GM12878 (cell line): ENCODE measurements at regions of chr18 and their contacts with region 1.

Region 1: GRCh38 chr18:21612125-21612991 is at the start of gene SNRPD1:
- DNase-seq: peak; percentile 71
- ATAC-seq: peak; percentile 98
- H3K4me3 ChIP-seq: peak within 1 kb of the TSS; percentile 83
- H3K27ac ChIP-seq: peak within 1 kb of the TSS; percentile 95
- H3K4me1 ChIP-seq: no peaks in the 10 kb centered on the region
- H3K27me3 ChIP-seq: no peaks in the 10 kb centered on the region
- CTCF ChIP-seq: peak; percentile 97 to 98 (median 98)
- EP300 ChIP-seq: no peak
- POLR2A ChIP-seq: peak; percentile 98
- RAD21 ChIP-seq: peak; percentile 43
- polyA plus RNA-seq, gene SNRPD1: 842 to 866 TPM

Region 2: GRCh38 chr18:21141668-21142422 is 470.5 kb before region 1 on chr18:
- CTCF ChIA-PET with region 1: no interaction called
- POLR2A ChIA-PET with region 1: no interaction called
- RAD21 ChIA-PET with region 1: no interaction called
- SMC1A ChIA-PET with region 1: no interaction called
- in situ Hi-C with region 1: no loop called
- intact Hi-C with region 1: no loop called
- DNase-seq: no peak
- ATAC-seq: no peak
- H3K4me3 ChIP-seq: no peak overlapping the region
- H3K27ac ChIP-seq: no peak overlapping the region
- H3K4me1 ChIP-seq: no peaks in the 10 kb centered on the region
- H3K27me3 ChIP-seq: no peaks in the 10 kb centered on the region
- CTCF ChIP-seq: no peak
- EP300 ChIP-seq: no peak
- POLR2A ChIP-seq: no peak
- RAD21 ChIP-seq: no peak

Region 3: DNA sequence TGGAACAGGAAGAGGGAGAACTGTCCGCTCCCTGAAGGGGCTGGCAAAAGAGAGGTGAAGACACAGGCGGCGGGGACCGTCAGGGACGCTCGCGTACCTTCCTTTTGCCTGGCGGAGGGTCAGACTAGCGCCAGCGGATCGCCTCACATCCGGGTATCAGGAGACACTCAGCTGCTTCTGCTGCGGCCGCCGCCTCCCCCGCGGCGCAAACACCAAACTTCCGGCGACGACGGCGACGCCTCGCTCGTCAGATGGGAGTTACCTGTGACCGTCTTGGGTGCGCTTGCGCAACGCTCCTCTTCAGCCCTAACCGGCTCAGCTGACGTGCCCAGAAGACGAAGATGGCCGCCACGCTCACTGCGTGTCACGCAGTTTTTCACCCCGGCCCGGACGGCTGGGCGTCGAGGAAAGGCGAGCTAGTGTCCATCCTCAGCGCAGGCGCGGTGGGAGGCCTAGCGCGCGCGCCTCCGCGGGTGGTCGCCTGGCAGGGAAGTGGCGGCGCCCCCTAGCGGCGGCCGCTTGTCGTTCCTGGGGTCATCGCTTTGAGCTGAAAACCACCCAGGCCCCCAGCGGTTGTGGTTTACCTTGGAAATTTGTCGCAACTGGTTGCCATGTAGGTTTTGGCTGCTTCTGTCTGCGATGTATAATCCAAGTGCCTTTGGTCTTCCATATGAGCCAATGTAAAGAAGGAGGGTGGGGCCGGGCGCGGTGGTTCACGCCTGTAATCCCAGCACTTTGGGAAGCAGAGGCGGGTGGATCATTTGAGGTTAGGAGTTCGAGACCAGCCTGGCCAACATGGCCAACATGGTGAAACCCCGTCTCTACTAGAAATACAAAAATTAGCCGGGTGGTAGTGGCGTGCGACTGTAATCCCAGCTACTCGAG is 11.6 kb before region 1 on chr18 and contains the start of gene ESCO1:
- CTCF ChIA-PET with region 1: interaction called, 173 read pairs
- POLR2A ChIA-PET with region 1: interaction called, 19 read pairs
- RAD21 ChIA-PET with region 1: interaction called, 17 read pairs
- SMC1A ChIA-PET with region 1: interaction called, 17 read pairs
- in situ Hi-C with region 1: no loop called
- intact Hi-C with region 1: no loop called
- DNase-seq: peak; percentile 95
- ATAC-seq: peak; percentile 90
- H3K4me3 ChIP-seq: peak within 1 kb of the TSS; percentile 76
- H3K27ac ChIP-seq: peak within 1 kb of the TSS; percentile 90
- H3K4me1 ChIP-seq: peaks cover 27% of the 10 kb centered on the region
- H3K27me3 ChIP-seq: no peaks in the 10 kb centered on the region
- CTCF ChIP-seq: peak; percentile 90 to 95 (median 93)
- EP300 ChIP-seq: no peak; a peak in 1 of 4 replicates
- POLR2A ChIP-seq: peak; percentile 98
- RAD21 ChIP-seq: peak; percentile 38; the same call in 1 of the 2 replicates
- polyA plus RNA-seq, gene ESCO1: 9.6 to 11.2 TPM

Region 4: DNA sequence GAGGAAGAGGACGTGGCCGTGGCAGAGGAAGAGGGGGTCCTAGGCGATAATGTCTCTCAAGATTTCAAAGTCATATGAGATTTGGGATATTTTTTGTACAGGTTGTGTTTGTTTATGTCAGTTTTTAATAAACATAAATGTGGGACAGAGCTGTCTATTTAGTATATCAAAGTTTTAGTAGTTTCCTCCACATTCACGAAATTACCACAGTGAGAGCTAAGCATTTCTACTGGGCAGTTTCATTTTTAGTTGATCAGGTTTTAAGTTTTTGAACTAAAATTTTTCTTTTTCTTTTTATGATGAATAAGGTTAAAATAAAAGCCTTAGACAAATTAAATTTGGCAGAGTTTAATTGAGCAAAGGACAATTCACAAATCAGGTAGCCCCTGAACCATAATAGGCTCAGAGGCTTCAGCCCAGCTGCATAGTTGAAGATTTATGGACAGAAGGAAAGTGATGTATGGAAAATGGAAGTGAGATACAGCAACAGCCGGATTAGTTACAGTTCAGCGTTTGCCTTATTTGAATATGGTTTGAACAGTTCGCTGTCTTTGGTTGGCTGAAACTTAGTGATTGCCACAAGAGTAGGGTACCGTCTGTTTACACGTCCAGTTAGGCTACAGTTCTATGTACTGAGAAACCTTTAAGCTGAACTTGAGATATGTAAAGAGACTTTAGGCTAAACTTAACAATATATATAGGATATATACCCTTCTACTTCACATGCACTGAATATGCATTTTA is 16.9 kb after region 1 on chr18:
- CTCF ChIA-PET with region 1: interaction called, 16 read pairs
- POLR2A ChIA-PET with region 1: interaction called, 4 read pairs
- RAD21 ChIA-PET with region 1: no interaction called
- SMC1A ChIA-PET with region 1: interaction called, 8 read pairs
- in situ Hi-C with region 1: no loop called
- intact Hi-C with region 1: no loop called
- DNase-seq: peak; percentile 67
- ATAC-seq: peak; percentile 92
- H3K4me3 ChIP-seq: peak overlapping the region; percentile 19; the same call in 1 of the 2 replicates
- H3K27ac ChIP-seq: peak overlapping the region; percentile 64
- H3K4me1 ChIP-seq: peaks cover 15% of the 10 kb centered on the region
- H3K27me3 ChIP-seq: no peaks in the 10 kb centered on the region
- CTCF ChIP-seq: no peak
- EP300 ChIP-seq: no peak
- POLR2A ChIP-seq: no peak
- RAD21 ChIP-seq: no peak

Region 5: DNA sequence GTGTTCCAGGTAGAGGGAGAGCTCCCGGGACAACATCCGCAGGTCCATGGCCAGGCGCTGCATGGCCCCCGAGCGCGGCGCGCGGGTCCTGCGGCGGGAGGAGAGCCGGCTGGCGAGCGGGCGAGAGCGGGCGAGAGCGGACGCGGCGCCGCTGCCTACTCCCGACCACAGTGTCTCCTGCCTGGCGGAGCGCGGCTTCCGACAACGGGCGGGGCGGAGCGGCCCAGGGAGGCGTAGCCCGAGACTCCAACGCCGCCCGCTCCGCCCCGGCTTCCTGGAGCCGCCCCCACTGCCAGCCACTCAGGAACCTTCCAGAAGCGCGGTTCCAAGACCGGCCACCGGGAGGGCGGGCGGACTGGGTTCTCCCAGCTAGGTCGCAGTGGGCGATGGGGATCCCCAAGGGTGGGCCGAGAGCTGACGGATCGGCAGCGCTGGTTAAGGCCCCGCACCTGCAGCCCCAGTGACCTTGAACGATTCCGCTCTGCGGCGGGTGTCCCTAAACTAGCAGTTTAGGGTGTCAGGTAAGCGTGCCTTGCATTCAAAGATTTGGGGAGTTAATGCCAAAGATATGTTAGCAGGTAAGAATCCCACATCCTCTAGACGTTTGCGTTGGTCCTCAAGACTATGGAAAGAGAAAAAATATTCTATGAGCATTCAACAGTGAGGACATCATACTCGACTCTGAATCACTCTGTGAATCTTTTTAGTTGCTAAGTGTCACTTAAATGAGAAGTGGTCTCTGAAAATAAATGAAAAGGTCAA is 92.4 kb after region 1 on chr18 and contains the start of gene ABHD3:
- CTCF ChIA-PET with region 1: interaction called, 9 read pairs
- POLR2A ChIA-PET with region 1: interaction called, 7 read pairs
- RAD21 ChIA-PET with region 1: interaction called, 3 read pairs
- SMC1A ChIA-PET with region 1: interaction called, 4 read pairs
- in situ Hi-C with region 1: no loop called
- intact Hi-C with region 1: loop called (anchors 1 kb)
- DNase-seq: peak; percentile 55
- ATAC-seq: peak; percentile 97
- H3K4me3 ChIP-seq: peak within 1 kb of the TSS; percentile 76
- H3K27ac ChIP-seq: peak within 1 kb of the TSS; percentile 83
- H3K4me1 ChIP-seq: no peaks in the 10 kb centered on the region
- H3K27me3 ChIP-seq: no peaks in the 10 kb centered on the region
- CTCF ChIP-seq: peak; percentile 27 to 42 (median 35); a peak in 5 of 6 replicates
- EP300 ChIP-seq: no peak
- POLR2A ChIP-seq: peak; percentile 96
- RAD21 ChIP-seq: peak; percentile 23; the same call in 1 of the 2 replicates
- polyA plus RNA-seq, gene ABHD3: 4.9 to 11.9 TPM

Region 6: DNA sequence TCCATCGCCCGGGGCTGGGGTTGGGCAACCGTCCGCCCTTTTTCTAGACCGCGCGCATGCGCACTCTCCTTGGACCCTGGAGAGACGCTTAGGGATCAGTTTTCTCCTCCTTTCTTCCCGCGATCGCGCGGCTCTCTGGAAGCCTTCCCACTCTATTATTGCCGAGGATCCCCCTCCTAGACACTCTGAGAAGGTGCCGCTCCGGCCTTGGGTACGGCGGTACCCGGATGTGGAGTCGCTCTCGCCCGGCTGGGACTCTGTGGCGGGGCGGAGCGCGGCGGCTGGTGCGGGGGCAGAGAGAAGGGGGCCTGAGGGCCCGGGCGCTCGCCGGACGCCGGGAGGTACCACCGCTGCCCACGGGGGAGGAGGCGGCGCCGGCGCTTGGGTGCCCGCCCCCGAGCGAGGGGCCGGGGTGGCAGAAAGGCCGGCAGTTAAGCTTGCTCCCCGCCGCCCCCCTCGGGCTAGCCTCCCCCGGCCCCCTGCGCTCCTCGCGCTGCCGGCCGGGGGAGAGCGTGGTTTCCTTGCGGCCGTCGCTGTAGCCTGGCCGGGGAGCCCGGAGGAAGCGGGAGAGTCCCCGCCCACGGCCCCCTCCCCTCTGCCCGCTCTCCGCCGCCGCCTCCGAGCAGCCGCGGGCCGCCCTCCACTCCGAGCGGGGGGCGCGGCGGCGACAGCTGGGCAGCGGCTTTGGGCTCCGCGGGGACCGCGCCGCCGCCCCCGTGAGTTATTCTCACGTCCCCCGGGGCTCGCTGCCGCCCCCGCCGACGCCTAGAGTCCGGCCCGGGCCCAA is 128.6 kb after region 1 on chr18 and contains the start of gene MIB1:
- CTCF ChIA-PET with region 1: interaction called, 4 read pairs
- POLR2A ChIA-PET with region 1: interaction called, 4 read pairs
- RAD21 ChIA-PET with region 1: interaction called, 3 read pairs
- SMC1A ChIA-PET with region 1: interaction called, 5 read pairs
- in situ Hi-C with region 1: no loop called
- intact Hi-C with region 1: loop called (anchors 5 kb)
- DNase-seq: peak; percentile 83
- ATAC-seq: peak; percentile 85
- H3K4me3 ChIP-seq: peak within 1 kb of the TSS; percentile 96
- H3K27ac ChIP-seq: peak within 1 kb of the TSS; percentile 91
- H3K4me1 ChIP-seq: no peaks in the 10 kb centered on the region
- H3K27me3 ChIP-seq: no peaks in the 10 kb centered on the region
- CTCF ChIP-seq: no peak
- EP300 ChIP-seq: no peak
- POLR2A ChIP-seq: peak; percentile 64
- RAD21 ChIP-seq: no peak
- polyA plus RNA-seq, gene MIB1: 3.6 to 4.8 TPM

Region 7: GRCh38 chr18:21760321-21760720 is 148.0 kb after region 1 on chr18:
- CTCF ChIA-PET with region 1: interaction called, 3 read pairs
- POLR2A ChIA-PET with region 1: no interaction called
- RAD21 ChIA-PET with region 1: no interaction called
- SMC1A ChIA-PET with region 1: interaction called, 3 read pairs
- in situ Hi-C with region 1: no loop called
- intact Hi-C with region 1: loop called (anchors 5 kb)
- DNase-seq: no peak
- ATAC-seq: no peak
- H3K4me3 ChIP-seq: no peak overlapping the region
- H3K27ac ChIP-seq: no peak overlapping the region
- H3K4me1 ChIP-seq: peaks cover 20% of the 10 kb centered on the region; the same call in 1 of the 2 replicates
- H3K27me3 ChIP-seq: no peaks in the 10 kb centered on the region
- CTCF ChIP-seq: no peak
- EP300 ChIP-seq: no peak
- POLR2A ChIP-seq: no peak
- RAD21 ChIP-seq: no peak